PC-9 (cell line): ENCODE measurements at regions of chr16 and their contacts with region 1.

Region 1: DNA sequence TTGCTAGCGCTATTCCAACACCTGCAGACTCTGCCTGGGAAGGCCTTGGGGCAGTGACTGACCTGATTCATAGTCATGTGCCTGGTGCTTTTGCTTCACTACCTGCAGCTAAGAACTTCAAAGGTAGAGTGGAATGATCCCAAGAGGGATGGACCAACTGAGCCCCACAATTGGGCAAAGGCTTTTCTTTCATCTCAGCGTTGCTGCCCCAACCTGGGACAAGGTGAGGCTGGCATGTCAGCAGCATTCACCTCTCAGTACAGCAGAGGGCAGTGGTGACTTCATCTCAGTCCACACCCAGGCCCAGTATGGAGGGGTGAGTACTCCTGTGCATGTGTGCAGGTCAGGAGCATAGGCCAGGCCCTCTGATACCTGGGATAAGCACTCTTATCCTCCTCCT is 149.6 kb upstream of the GNAO1 start:
- DNase-seq: peak; percentile 16 to 76
- H3K4me3 ChIP-seq: no peak overlapping the region
- H3K27ac ChIP-seq: no peak overlapping the region
- H3K4me1 ChIP-seq: no peaks in the 10 kb centered on the region
- H3K27me3 ChIP-seq: no peaks in the 10 kb centered on the region
- CTCF ChIP-seq: peak; percentile 62

Region 2: DNA sequence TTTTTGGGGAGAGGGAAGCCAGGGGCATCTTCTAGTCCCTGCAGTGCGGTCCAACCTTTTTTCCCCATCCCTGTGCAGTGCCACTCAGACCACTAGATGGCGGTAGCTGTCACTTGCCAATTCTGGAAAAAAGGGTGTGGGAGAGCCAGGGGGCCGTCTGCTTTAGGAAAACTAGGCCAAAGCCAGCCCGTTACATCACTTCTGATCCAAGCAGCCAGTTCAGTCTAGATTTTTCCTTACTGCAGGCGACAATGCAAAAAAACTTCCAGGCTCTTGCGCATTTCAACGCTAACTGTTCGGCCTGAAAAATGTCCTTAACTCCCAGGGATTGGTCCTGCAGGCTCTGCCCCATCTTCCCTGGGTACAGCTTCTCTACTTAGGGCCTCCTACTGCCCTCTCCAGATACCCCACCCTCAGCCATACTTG is 97.3 kb before region 1 on chr16:
- CTCF ChIA-PET with region 1: no interaction called
- POLR2A ChIA-PET with region 1: no interaction called
- intact Hi-C with region 1: loop called (anchors 5 kb)
- DNase-seq: peak in 1 of 2 experiments; percentile 49
- H3K4me3 ChIP-seq: no peak overlapping the region
- H3K27ac ChIP-seq: no peak overlapping the region
- H3K4me1 ChIP-seq: no peaks in the 10 kb centered on the region
- H3K27me3 ChIP-seq: no peaks in the 10 kb centered on the region; the same call in 1 of the 2 replicates
- CTCF ChIP-seq: peak; percentile 95

Region 3: GRCh38 chr16:56317998-56318826 is 276.5 kb after region 1 on chr16:
- CTCF ChIA-PET with region 1: no interaction called
- POLR2A ChIA-PET with region 1: no interaction called
- intact Hi-C with region 1: no loop called
- DNase-seq: peak; percentile 42 to 72
- H3K4me3 ChIP-seq: no peak overlapping the region
- H3K27ac ChIP-seq: no peak overlapping the region
- H3K4me1 ChIP-seq: peaks cover 11% of the 10 kb centered on the region
- H3K27me3 ChIP-seq: no peaks in the 10 kb centered on the region
- CTCF ChIP-seq: peak; percentile 94